CD8-positive, alpha-beta T cell (primary cell): ENCODE measurements at regions of chr2 and their contacts with region 1.

Region 1: GRCh38 chr2:135052042-135052876 is at the start of gene RAB3GAP1:
- DNase-seq: peak; percentile 80 to 97 (median 91)
- ATAC-seq: peak; percentile 80
- H3K4me3 ChIP-seq: peak within 1 kb of the TSS; percentile 79 to 80
- H3K4me3 Mint-ChIP-seq: peak within 1 kb of the TSS; percentile 92
- H3K27ac ChIP-seq: peak within 1 kb of the TSS; percentile 96
- H3K27ac Mint-ChIP-seq: peak within 1 kb of the TSS; percentile 99
- H3K4me1 ChIP-seq: peaks cover 11% of the 10 kb centered on the region
- H3K4me1 Mint-ChIP-seq: peaks cover 42% of the 10 kb centered on the region
- H3K27me3 ChIP-seq: peaks cover 0 to 3% of the 10 kb centered on the region in 2 experiments
- H3K27me3 Mint-ChIP-seq: no peaks in the 10 kb centered on the region
- CTCF ChIP-seq: no peak
- total RNA-seq, gene RAB3GAP1: 31.0 to 32.8 TPM

Region 2: DNA sequence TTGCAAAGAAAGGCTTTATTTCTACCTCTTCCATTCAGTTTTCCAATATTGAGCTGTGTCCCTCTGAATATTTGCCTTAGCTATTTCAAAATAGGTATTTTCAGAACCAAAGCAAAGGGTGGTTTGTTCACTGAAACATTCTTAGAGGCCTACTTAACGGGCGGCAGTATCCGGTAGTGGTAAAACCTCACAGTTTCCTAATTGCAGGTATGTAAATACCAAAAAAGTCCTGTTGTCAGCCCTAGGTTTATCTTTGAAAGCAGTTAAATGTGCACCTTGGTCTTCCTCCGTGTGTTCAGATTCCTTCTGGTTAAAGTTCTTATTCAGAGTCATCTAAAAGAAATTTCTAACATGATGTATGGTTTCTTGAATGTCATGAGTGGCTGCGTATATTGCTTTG is 94.8 kb before region 1 on chr2:
- CTCF ChIA-PET with region 1: no interaction called
- POLR2A ChIA-PET with region 1: no interaction called
- intact Hi-C with region 1: no loop called
- DNase-seq: no peak
- ATAC-seq: no peak
- H3K4me3 ChIP-seq: no peak overlapping the region
- H3K4me3 Mint-ChIP-seq: no peak overlapping the region
- H3K27ac ChIP-seq: no peak overlapping the region
- H3K27ac Mint-ChIP-seq: no peak overlapping the region
- H3K4me1 ChIP-seq: no peaks in the 10 kb centered on the region
- H3K4me1 Mint-ChIP-seq: no peaks in the 10 kb centered on the region
- H3K27me3 ChIP-seq: no peaks in the 10 kb centered on the region
- H3K27me3 Mint-ChIP-seq: no peaks in the 10 kb centered on the region
- CTCF ChIP-seq: no peak

Region 3: DNA sequence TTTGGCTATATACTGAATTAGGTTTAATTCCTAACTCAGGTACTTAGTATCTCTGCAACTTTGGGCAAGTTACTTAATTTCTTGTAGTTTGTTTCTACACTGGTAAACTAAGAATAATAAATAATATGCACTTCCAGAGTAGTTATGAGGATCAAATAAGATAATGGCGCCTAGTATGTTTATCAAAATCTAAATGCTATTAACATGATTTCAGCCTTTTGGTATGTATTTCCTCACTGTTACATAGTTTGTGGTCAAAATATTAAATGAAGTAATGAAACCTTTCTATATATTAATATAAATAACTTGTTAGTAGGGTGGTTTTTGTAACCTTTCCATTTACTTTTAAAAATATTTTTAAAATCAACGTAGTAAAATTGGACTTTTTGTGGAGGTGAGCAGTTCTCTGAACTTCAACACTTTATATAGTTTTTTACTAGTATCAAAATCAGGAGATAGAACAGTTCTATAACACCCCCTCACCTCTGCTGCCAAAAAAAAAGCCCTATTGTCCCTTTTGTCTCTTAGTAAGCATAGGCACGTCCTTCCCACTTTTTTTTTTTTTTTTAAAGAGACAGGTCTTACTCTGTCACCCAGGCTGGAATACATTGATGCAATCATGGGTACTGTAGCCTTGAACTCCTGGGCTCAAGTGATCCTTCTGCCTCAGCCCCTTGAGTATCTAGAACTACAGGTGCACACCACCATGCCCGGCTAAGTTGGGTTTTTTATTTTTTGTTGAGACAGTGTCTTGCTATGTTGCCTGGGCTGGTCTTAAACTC is 44.6 kb after region 1 on chr2:
- CTCF ChIA-PET with region 1: no interaction called
- POLR2A ChIA-PET with region 1: no interaction called
- intact Hi-C with region 1: loop called in 1 of 2 experiments (anchors 5 kb)
- DNase-seq: no peak
- ATAC-seq: no peak
- H3K4me3 ChIP-seq: no peak overlapping the region
- H3K4me3 Mint-ChIP-seq: no peak overlapping the region
- H3K27ac ChIP-seq: no peak overlapping the region
- H3K27ac Mint-ChIP-seq: no peak overlapping the region
- H3K4me1 ChIP-seq: no peaks in the 10 kb centered on the region
- H3K4me1 Mint-ChIP-seq: peaks cover 14% of the 10 kb centered on the region
- H3K27me3 ChIP-seq: no peaks in the 10 kb centered on the region
- H3K27me3 Mint-ChIP-seq: no peaks in the 10 kb centered on the region
- CTCF ChIP-seq: no peak

Region 4: DNA sequence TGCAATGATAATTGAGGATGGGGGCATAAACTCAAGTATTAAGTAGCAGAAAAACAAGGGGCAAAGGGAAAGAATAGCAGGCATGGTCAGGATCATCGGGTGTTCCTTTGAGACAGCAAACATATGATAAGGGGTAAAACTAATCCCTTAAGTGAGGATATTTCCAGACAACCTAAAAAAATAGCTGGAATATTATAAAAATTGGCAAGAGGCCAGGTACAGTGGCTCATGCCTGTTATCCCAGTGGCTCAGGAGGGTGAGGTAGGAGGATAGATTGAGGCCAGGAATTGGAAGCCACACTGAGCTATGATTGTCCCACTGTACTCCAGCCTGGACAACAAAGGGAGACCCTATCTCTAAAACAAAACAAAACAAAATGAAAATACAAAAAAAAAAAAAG is 339.7 kb after region 1 on chr2:
- CTCF ChIA-PET with region 1: no interaction called
- POLR2A ChIA-PET with region 1: no interaction called
- intact Hi-C with region 1: no loop called
- DNase-seq: no peak
- ATAC-seq: no peak
- H3K4me3 ChIP-seq: no peak overlapping the region
- H3K4me3 Mint-ChIP-seq: no peak overlapping the region
- H3K27ac ChIP-seq: no peak overlapping the region
- H3K27ac Mint-ChIP-seq: no peak overlapping the region
- H3K4me1 ChIP-seq: no peaks in the 10 kb centered on the region
- H3K4me1 Mint-ChIP-seq: no peaks in the 10 kb centered on the region
- H3K27me3 ChIP-seq: no peaks in the 10 kb centered on the region
- H3K27me3 Mint-ChIP-seq: no peaks in the 10 kb centered on the region
- CTCF ChIP-seq: no peak

Region 5: GRCh38 chr2:135657806-135658582 is 605.7 kb after region 1 on chr2:
- CTCF ChIA-PET with region 1: no interaction called
- POLR2A ChIA-PET with region 1: no interaction called
- intact Hi-C with region 1: loop called in 1 of 2 experiments (anchors 5 kb)
- DNase-seq: peak; percentile 35 to 86 (median 73)
- ATAC-seq: peak; percentile 92
- H3K4me3 ChIP-seq: peak overlapping the region; percentile 21 to 52
- H3K4me3 Mint-ChIP-seq: peak overlapping the region; percentile 85
- H3K27ac ChIP-seq: peak overlapping the region; percentile 41 to 80
- H3K27ac Mint-ChIP-seq: peak overlapping the region; percentile 99
- H3K4me1 ChIP-seq: peaks cover 16% of the 10 kb centered on the region
- H3K4me1 Mint-ChIP-seq: peaks cover 19% of the 10 kb centered on the region
- H3K27me3 ChIP-seq: no peaks in the 10 kb centered on the region
- H3K27me3 Mint-ChIP-seq: no peaks in the 10 kb centered on the region
- CTCF ChIP-seq: no peak

Region 6: DNA sequence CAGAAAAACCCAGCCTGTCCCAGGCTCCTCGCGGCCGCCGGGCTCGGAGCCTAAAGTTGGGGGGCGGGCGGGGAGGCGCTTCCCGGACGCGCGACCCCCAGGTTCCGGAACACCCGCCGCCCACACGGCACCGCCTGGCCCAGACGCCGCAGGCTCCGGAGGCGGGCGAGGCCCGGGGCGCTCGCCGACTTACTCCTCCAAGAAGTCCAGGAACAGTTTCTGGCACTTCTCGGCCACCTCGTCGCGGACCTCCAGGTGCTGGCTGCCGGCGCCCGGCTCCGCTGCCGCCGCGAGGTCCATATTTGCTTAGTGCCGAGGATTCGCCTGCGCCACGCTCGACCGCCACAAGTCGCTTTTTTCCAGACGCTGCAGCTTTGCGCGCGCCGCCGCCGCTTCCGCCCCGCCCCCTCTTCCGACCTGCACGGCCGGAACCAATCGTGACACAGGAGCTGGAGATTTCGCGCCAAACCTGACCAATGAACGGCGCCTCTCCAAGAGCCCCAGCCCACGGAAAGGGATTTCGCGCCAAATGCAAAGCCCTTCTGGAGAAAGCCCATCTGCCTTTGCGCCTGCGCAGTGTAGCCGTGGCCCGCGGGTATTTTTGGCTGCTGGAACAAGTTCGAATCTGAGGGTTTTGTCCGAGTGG is 823.9 kb after region 1 on chr2 and contains the start of gene MCM6:
- CTCF ChIA-PET with region 1: no interaction called
- POLR2A ChIA-PET with region 1: no interaction called
- intact Hi-C with region 1: loop called in 1 of 2 experiments (anchors 5 kb)
- DNase-seq: peak; percentile 95 to 99 (median 97)
- ATAC-seq: peak; percentile 89
- H3K4me3 ChIP-seq: peak within 1 kb of the TSS; percentile 81 to 82
- H3K4me3 Mint-ChIP-seq: peak within 1 kb of the TSS; percentile 92
- H3K27ac ChIP-seq: peak within 1 kb of the TSS; percentile 85 to 96
- H3K27ac Mint-ChIP-seq: peak within 1 kb of the TSS; percentile 97
- H3K4me1 ChIP-seq: peaks cover 18% of the 10 kb centered on the region
- H3K4me1 Mint-ChIP-seq: peaks cover 37% of the 10 kb centered on the region
- H3K27me3 ChIP-seq: no peaks in the 10 kb centered on the region
- H3K27me3 Mint-ChIP-seq: no peaks in the 10 kb centered on the region
- CTCF ChIP-seq: no peak
- total RNA-seq, gene MCM6: 37.3 to 38.8 TPM